Gastrocnemius medialis (tissue), 4 donors: ENCODE measurements at regions of chr17 and their contacts with region 1.

Region 1: DNA sequence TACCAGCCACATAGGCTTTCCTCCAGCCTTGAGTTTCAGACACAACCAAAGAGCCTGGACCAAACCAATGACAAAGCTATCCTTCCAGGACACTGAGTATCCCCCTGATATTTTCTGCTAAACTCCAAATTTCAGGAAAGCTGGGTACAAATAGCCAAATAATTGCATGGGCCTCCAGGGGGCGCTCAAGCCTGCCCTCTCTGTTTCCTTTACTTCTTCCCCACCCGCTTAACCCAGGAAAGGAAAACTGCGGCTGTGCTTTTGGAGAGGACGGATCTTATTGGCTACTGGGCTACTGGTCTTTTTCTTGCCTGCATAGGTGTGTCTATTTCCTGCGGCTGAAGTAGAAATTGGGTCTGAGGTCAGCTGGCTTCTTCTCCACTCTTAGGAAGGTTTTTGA is 30.1 kb downstream of the GNGT2 start:
- DNase-seq: peak; percentile 12 to 37
- ATAC-seq: peak; percentile 52 to 73
- H3K4me3 ChIP-seq: no peak overlapping the region
- H3K27ac ChIP-seq: no peak overlapping the region
- H3K4me1 ChIP-seq: no peaks in the 10 kb centered on the region
- H3K27me3 ChIP-seq: peaks cover 0 to 10% (median 0%) of the 10 kb centered on the region in 3 donors
- CTCF ChIP-seq: peak; percentile 61 to 79 (median 76)
- POLR2A ChIP-seq: no peak

Region 2: GRCh38 chr17:49045376-49045775 is 134.9 kb before region 1 on chr17:
- in situ Hi-C with region 1: no loop called
- intact Hi-C with region 1: no loop called
- DNase-seq: no peak
- ATAC-seq: no peak
- H3K4me3 ChIP-seq: no peak overlapping the region
- H3K27ac ChIP-seq: no peak overlapping the region
- H3K4me1 ChIP-seq: no peaks in the 10 kb centered on the region
- H3K27me3 ChIP-seq: no peaks in the 10 kb centered on the region
- CTCF ChIP-seq: no peak
- POLR2A ChIP-seq: no peak

Region 3: DNA sequence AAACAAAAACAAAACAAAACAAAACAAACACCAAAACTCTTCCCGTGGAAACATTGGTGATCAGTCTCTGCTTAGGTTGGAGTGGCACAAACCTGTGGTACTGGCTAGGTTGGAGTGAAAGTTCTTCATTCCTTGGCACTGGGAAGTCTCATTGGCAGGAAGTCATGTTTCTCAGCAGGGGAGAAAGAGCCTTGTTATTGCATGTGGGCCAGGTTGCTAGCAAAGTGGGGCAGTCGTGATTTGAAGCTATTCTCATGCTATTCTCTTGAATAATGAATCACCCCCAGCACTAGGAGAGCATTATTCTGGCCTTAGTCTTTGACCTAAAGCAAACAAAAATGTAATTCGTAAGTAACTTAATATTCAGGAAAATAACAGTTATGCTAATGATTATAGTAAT is 72.0 kb before region 1 on chr17:
- in situ Hi-C with region 1: no loop called
- intact Hi-C with region 1: no loop called
- DNase-seq: no peak
- ATAC-seq: no peak
- H3K4me3 ChIP-seq: no peak overlapping the region
- H3K27ac ChIP-seq: no peak overlapping the region
- H3K4me1 ChIP-seq: no peaks in the 10 kb centered on the region
- H3K27me3 ChIP-seq: peaks cover 0 to 8% (median 2%) of the 10 kb centered on the region in 3 donors
- CTCF ChIP-seq: no peak
- POLR2A ChIP-seq: no peak

Region 4: GRCh38 chr17:49230636-49231562 is 50.6 kb after region 1 on chr17 and contains the start of gene PHOSPHO1:
- in situ Hi-C with region 1: loop called in 1 of 4 experiments (anchors 5 kb)
- intact Hi-C with region 1: loop called (anchors 1 kb)
- DNase-seq: peak; percentile 59 to 73
- ATAC-seq: peak; percentile 88 to 90
- H3K4me3 ChIP-seq: peak within 1 kb of the TSS; percentile 68 to 93 (median 78)
- H3K27ac ChIP-seq: peak within 1 kb of the TSS; percentile 23 to 71 (median 50)
- H3K4me1 ChIP-seq: peaks cover 0 to 21% of the 10 kb centered on the region in 2 donors
- H3K27me3 ChIP-seq: no peaks in the 10 kb centered on the region
- CTCF ChIP-seq: no peak
- POLR2A ChIP-seq: peak; percentile 39 to 66
- total RNA-seq, gene PHOSPHO1: 1.0 to 3.7 (median 2.1) TPM in 3 of 4 donors, not detected in the other

Region 5: GRCh38 chr17:49290690-49291359 is 110.5 kb after region 1 on chr17:
- in situ Hi-C with region 1: no loop called
- intact Hi-C with region 1: loop called (anchors 5 kb)
- DNase-seq: no peak
- ATAC-seq: peak in 1 of 2 donors; percentile 49
- H3K4me3 ChIP-seq: no peak overlapping the region
- H3K27ac ChIP-seq: no peak overlapping the region
- H3K4me1 ChIP-seq: no peaks in the 10 kb centered on the region
- H3K27me3 ChIP-seq: no peaks in the 10 kb centered on the region
- CTCF ChIP-seq: peak; percentile 32 to 56 (median 45)
- POLR2A ChIP-seq: no peak

Region 6: GRCh38 chr17:49407981-49408501 is 227.7 kb after region 1 on chr17:
- in situ Hi-C with region 1: loop called in 2 of 4 experiments (anchors 10 to 25 kb)
- intact Hi-C with region 1: no loop called
- DNase-seq: peak in 1 of 2 donors; percentile 28
- ATAC-seq: peak in 1 of 2 donors; percentile 3
- H3K4me3 ChIP-seq: no peak overlapping the region
- H3K27ac ChIP-seq: no peak overlapping the region
- H3K4me1 ChIP-seq: no peaks in the 10 kb centered on the region
- H3K27me3 ChIP-seq: no peaks in the 10 kb centered on the region
- CTCF ChIP-seq: peak in 4 of 5 experiments; percentile 18 to 47 (median 42)
- POLR2A ChIP-seq: no peak